Activated T-helper 2 cell treated with anti-CD3 and anti-CD28 coated beads, Interferon-gamma antibody, Interleukin-2, Interleukin-4, amounts not matched to agents 10 μg/mL and 5 μg/mL and 100 μg/mL, durations not matched to agents 14 hours and 24 hours and 36 hours (primary cell): ENCODE measurements at regions of chr6 and their contacts with region 1.

Region 1: GRCh38 chr6:73653571-73654424 is at the start of gene SLC17A5:
- DNase-seq: peak; percentile 82
- H3K4me3 Mint-ChIP-seq: peak within 1 kb of the TSS; percentile 96
- H3K27ac Mint-ChIP-seq: peak within 1 kb of the TSS; percentile 98
- H3K4me1 Mint-ChIP-seq: peaks cover 35% of the 10 kb centered on the region
- H3K27me3 Mint-ChIP-seq: no peaks in the 10 kb centered on the region
- total RNA-seq, gene SLC17A5: 5.8 and 6.7 TPM in 2 replicates

Region 2: DNA sequence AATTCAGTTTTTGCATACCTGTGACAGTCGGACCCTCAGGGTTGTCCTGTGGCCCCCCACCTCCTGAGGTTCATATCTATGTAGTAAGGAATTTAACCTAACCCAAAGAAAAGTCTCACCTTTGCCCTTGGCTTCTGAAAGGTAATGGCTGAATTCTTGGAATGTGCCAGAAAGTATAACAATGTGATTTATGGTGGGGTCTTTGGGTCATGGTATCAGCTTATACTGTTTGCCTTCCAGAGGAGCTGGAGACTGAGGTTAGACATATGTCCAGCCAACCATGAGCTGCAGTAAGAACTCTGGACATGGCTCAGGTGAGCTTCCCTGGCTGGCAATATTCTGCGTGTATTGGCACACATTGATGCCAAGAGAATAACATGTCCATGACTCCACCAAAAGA is 232.3 kb before region 1 on chr6:
- intact Hi-C with region 1: no loop called
- DNase-seq: no peak
- H3K4me3 Mint-ChIP-seq: no peak overlapping the region
- H3K27ac Mint-ChIP-seq: no peak overlapping the region
- H3K4me1 Mint-ChIP-seq: peaks cover 27% of the 10 kb centered on the region
- H3K27me3 Mint-ChIP-seq: no peaks in the 10 kb centered on the region

Region 3: DNA sequence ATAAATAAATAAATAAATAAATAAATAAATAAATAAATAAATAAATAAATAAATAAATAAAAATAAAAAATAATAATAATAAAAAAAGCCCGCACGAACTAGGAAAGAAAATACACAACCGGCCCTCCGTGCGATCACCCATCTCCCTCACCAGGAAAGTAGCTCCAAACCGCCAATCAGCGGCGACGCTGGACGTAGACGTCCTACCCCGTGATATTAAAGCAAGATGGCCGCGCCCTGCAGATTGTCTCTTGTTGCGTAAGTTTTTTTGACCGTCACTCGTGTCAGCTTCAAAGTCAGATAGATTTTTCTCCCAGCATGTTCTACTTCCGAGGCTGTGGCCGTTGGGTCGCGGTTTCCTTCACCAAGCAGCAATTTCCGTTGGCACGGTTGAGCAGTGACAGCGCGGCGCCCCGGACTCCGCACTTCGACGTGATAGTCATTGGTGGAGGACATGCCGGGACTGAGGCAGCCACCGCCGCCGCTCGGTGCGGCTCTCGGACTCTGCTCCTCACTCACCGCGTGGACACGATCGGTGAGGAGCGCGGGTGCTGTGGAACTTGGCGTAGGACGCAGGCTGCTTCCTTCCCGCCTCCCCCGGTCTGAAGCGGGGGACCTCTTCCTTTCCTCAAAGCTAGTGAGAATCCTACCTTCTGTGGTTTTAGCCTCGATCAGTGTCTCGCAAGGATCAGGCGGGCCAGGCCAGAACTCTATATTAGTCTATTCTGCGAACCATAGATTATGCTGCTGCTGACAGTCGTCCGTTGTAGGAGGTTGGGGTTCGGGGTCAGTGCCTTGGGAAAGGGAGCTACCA is 192.1 kb before region 1 on chr6 and contains the start of gene MTO1:
- intact Hi-C with region 1: loop called (anchors 2 kb)
- DNase-seq: peak; percentile 78
- H3K4me3 Mint-ChIP-seq: peak within 1 kb of the TSS; percentile 89
- H3K27ac Mint-ChIP-seq: peak within 1 kb of the TSS; percentile 94
- H3K4me1 Mint-ChIP-seq: peaks cover 41% of the 10 kb centered on the region
- H3K27me3 Mint-ChIP-seq: no peaks in the 10 kb centered on the region
- total RNA-seq, gene MTO1: 27.9 and 32.1 TPM in 2 replicates

Region 4: GRCh38 chr6:73580247-73581149 is 73.3 kb before region 1 on chr6:
- intact Hi-C with region 1: loop called (anchors 2 kb)
- DNase-seq: peak; percentile 47
- H3K4me3 Mint-ChIP-seq: peak overlapping the region; percentile 51
- H3K27ac Mint-ChIP-seq: peak overlapping the region; percentile 97
- H3K4me1 Mint-ChIP-seq: peaks cover 18% of the 10 kb centered on the region
- H3K27me3 Mint-ChIP-seq: no peaks in the 10 kb centered on the region

Region 5: GRCh38 chr6:73624896-73625295 is 28.9 kb before region 1 on chr6:
- intact Hi-C with region 1: no loop called
- DNase-seq: no peak
- H3K4me3 Mint-ChIP-seq: no peak overlapping the region
- H3K27ac Mint-ChIP-seq: no peak overlapping the region
- H3K4me1 Mint-ChIP-seq: no peaks in the 10 kb centered on the region
- H3K27me3 Mint-ChIP-seq: no peaks in the 10 kb centered on the region

Region 6: DNA sequence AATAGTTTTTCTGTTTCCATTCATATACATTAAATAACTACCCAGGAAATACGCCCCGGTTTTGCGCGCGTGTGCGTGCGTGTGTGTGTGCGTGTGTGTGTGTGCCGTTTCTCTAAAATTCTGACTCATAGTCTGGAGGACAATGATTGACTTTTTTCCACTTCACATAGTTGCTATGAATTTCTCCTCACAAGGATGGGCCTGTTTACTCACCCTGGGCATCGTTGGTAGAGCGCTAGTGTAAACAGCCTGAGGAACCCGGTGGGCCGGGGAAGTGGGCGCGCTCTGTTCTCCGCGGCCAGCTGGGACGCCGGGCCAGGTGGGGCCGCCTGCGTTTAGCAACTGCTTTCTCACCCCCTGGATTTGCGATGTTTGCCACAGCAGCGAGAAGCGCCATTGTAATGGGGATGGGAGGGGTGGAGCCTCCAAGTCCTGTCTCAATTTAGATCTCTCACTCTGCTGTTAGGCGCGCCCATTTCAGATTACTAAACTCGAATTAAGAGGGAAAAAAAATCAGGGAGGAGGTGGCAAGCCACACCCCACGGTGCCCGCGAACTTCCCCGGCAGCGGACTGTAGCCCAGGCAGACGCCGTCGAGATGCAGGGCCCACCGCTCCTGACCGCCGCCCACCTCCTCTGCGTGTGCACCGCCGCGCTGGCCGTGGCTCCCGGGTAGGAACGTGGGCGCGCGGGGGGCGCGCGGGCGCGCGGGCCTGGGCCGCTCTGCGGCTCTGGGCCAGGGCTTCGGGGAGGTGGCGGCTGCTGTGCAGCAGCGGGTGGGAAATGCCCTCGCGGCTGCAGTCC is 42.0 kb after region 1 on chr6 and contains the start of gene CD109:
- intact Hi-C with region 1: loop called (anchors 1 kb)
- DNase-seq: peak; percentile 71
- H3K4me3 Mint-ChIP-seq: peak within 1 kb of the TSS; percentile 86
- H3K27ac Mint-ChIP-seq: peak within 1 kb of the TSS; percentile 98
- H3K4me1 Mint-ChIP-seq: peaks cover 50% of the 10 kb centered on the region
- H3K27me3 Mint-ChIP-seq: no peaks in the 10 kb centered on the region
- total RNA-seq, gene CD109: 24.4 and 26.1 TPM in 2 replicates

Region 7: GRCh38 chr6:73732845-73733675 is 79.3 kb after region 1 on chr6:
- intact Hi-C with region 1: loop called (anchors 2 kb)
- DNase-seq: peak; percentile 66
- H3K4me3 Mint-ChIP-seq: no peak overlapping the region
- H3K27ac Mint-ChIP-seq: peak overlapping the region; percentile 47
- H3K4me1 Mint-ChIP-seq: peaks cover 28% of the 10 kb centered on the region
- H3K27me3 Mint-ChIP-seq: no peaks in the 10 kb centered on the region